ENCODE measurements at regions of chrX and their contacts with region 1.

Region 1: GRCh38 chrX:25858273-25858880 is 279.8 kb upstream of the MAGEB18 start:
- DNase-seq: peak; percentile 4
- H3K4me3 Mint-ChIP-seq: no peak overlapping the region
- H3K27ac Mint-ChIP-seq: no peak overlapping the region
- H3K4me1 Mint-ChIP-seq: no peaks in the 10 kb centered on the region
- H3K27me3 Mint-ChIP-seq: no peaks in the 10 kb centered on the region
- CTCF ChIP-seq: peak; percentile 23

Region 2: GRCh38 chrX:25523574-25524540 is 334.5 kb before region 1 on chrX:
- CTCF ChIA-PET with region 1: interaction called, 6 read pairs
- POLR2A ChIA-PET with region 1: no interaction called
- intact Hi-C with region 1: loop called (anchors 2 kb)
- DNase-seq: peak; percentile 68
- H3K4me3 Mint-ChIP-seq: peak overlapping the region; percentile 33
- H3K27ac Mint-ChIP-seq: no peak overlapping the region
- H3K4me1 Mint-ChIP-seq: peaks cover 13% of the 10 kb centered on the region
- H3K27me3 Mint-ChIP-seq: no peaks in the 10 kb centered on the region
- CTCF ChIP-seq: peak; percentile 29

Region 3: GRCh38 chrX:25721564-25721963 is 136.8 kb before region 1 on chrX:
- CTCF ChIA-PET with region 1: no interaction called
- POLR2A ChIA-PET with region 1: no interaction called
- intact Hi-C with region 1: loop called (anchors 5 kb)
- DNase-seq: peak; percentile 27
- H3K4me3 Mint-ChIP-seq: no peak overlapping the region
- H3K27ac Mint-ChIP-seq: no peak overlapping the region
- H3K4me1 Mint-ChIP-seq: no peaks in the 10 kb centered on the region
- H3K27me3 Mint-ChIP-seq: no peaks in the 10 kb centered on the region
- CTCF ChIP-seq: peak; percentile 40

Region 4: GRCh38 chrX:25869761-25870160 is 11.4 kb after region 1 on chrX:
- CTCF ChIA-PET with region 1: interaction called, 10 read pairs
- POLR2A ChIA-PET with region 1: no interaction called
- intact Hi-C with region 1: no loop called
- DNase-seq: no peak
- H3K4me3 Mint-ChIP-seq: no peak overlapping the region
- H3K27ac Mint-ChIP-seq: no peak overlapping the region
- H3K4me1 Mint-ChIP-seq: peaks cover 17% of the 10 kb centered on the region
- H3K27me3 Mint-ChIP-seq: no peaks in the 10 kb centered on the region
- CTCF ChIP-seq: no peak

Region 5: DNA sequence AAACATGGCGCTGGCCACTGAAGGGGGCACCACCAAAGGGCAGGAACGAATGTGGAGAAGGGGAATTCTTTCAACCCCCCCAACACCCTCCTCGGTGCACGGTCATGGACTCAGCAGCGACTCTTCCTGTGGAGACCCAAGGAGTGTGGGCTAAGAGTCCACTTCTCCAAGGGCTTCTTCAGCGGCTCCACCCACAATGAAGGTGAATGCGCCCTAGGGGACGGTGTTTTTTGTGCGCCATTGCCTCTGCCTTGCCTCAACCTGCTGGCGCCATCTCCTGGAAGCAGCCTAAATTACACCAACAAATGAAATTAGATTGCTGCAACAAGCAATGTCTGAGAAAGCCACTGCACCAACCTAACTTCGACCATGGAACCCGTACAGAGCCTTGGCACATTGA is 110.5 kb after region 1 on chrX:
- CTCF ChIA-PET with region 1: no interaction called
- POLR2A ChIA-PET with region 1: no interaction called
- intact Hi-C with region 1: loop called (anchors 10 kb)
- DNase-seq: peak; percentile 35
- H3K4me3 Mint-ChIP-seq: no peak overlapping the region
- H3K27ac Mint-ChIP-seq: no peak overlapping the region
- H3K4me1 Mint-ChIP-seq: no peaks in the 10 kb centered on the region
- H3K27me3 Mint-ChIP-seq: no peaks in the 10 kb centered on the region
- CTCF ChIP-seq: peak; percentile 39

Measured in MCF 10A (cell line).